HepG2 (cell line): ENCODE measurements at regions of chr12 and their contacts with region 1.

Region 1: DNA sequence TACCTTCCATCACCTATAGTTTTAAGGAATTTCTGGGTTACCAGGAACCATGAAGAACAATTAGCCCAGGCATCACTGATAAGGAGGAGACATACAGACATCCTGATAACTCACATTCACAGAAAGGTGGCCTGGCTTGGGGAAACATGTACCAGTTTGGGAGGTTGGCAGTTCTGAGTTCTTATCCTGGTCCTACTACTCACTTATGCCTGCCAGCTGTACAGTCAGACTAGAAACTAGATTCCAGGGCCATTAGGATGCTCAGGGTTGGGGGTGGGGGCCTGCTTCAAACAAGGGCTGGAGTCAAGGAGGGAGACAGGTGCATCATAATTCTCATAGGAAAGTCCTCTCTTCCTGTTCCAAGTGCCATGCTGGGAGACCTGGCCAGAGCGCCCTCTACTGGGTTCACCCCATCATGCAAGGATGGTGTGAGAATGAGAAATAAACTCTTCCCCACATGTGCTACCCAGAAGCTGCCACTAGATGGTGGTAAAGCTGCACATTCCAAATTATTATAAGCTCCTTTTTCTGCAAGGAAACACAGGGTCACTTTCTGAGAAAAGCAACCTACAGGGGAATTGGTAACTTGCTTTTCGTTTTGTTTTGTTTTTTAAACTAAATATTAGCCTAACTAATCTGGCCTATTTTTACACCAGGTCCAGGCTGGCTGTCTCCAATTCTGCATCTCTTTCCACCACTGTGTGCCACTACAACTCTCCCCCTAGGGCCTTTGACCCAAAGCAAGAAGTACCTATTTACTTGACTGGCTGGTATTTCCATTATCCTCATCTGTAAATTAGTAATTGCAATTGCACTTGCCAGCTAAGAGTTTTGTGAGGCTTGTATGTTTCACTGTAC is 14.5 kb downstream of the OAS2 start:
- DNase-seq: peak; percentile 63
- ATAC-seq: peak; percentile 71
- H3K4me3 ChIP-seq: no peak overlapping the region
- H3K27ac ChIP-seq: no peak overlapping the region
- H3K4me1 ChIP-seq: no peaks in the 10 kb centered on the region
- H3K27me3 ChIP-seq: 0 out of 5 replicates have a peak, but pooled peaks cover 0 to 3% of the 10 kb centered on the region in 2 experiments
- CTCF ChIP-seq: peak; percentile 85
- EP300 ChIP-seq: no peak
- POLR2A ChIP-seq: no peak
- RAD21 ChIP-seq: peak; percentile 72

Region 2: GRCh38 chr12:113030875-113031525 is 38.2 kb after region 1 on chr12:
- CTCF ChIA-PET with region 1: interaction called, 44 read pairs
- POLR2A ChIA-PET with region 1: interaction called, 4 read pairs
- in situ Hi-C with region 1: loop called (anchors 5 kb)
- intact Hi-C with region 1: loop called (anchors 1 kb)
- DNase-seq: peak; percentile 45
- ATAC-seq: peak; percentile 79
- H3K4me3 ChIP-seq: no peak overlapping the region
- H3K27ac ChIP-seq: no peak overlapping the region
- H3K4me1 ChIP-seq: no peaks in the 10 kb centered on the region
- H3K27me3 ChIP-seq: 0 out of 5 replicates have a peak, but pooled peaks cover 0 to 3% of the 10 kb centered on the region in 2 experiments
- CTCF ChIP-seq: peak; percentile 69
- EP300 ChIP-seq: no peak
- POLR2A ChIP-seq: no peak
- RAD21 ChIP-seq: no peak

Region 3: DNA sequence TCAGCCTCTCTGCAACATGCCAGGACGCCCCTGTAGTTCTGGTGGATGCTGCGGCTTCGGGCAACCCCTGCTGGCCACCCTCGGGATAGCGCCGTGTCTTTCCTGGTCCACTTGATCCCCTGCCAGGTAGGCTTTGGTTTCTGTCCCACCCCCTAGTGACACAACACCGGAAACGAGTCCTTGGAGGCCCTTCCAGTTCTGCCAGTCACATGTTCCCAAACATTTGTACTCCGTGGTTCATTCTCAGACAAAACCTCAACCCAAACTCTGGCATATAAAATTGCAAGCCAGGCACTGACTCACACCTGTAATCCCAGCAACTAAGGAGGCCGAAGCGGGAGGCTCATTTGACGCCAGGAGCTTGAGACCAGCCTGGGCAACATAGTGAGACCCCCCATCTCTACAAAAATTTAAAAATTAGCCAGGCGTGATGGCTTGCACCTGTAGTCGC is 105.7 kb after region 1 on chr12:
- CTCF ChIA-PET with region 1: no interaction called
- POLR2A ChIA-PET with region 1: no interaction called
- in situ Hi-C with region 1: no loop called
- intact Hi-C with region 1: loop called (anchors 2 kb)
- DNase-seq: peak; percentile 79
- ATAC-seq: peak; percentile 83
- H3K4me3 ChIP-seq: no peak overlapping the region
- H3K27ac ChIP-seq: no peak overlapping the region
- H3K4me1 ChIP-seq: peaks cover 16% of the 10 kb centered on the region
- H3K27me3 ChIP-seq: peaks cover 1 to 6% of the 10 kb centered on the region in 2 experiments; a peak in 2 of 5 replicates
- CTCF ChIP-seq: peak; percentile 95
- EP300 ChIP-seq: no peak
- POLR2A ChIP-seq: no peak
- RAD21 ChIP-seq: peak; percentile 87